MCF 10A (cell line): ENCODE measurements at regions of chr14 and their contacts with region 1.

Region 1: GRCh38 chr14:55051426-55052268 is at the start of gene MAPK1IP1L:
- DNase-seq: peak; percentile 94
- H3K4me3 Mint-ChIP-seq: peak within 1 kb of the TSS; percentile 83
- H3K27ac Mint-ChIP-seq: peak within 1 kb of the TSS; percentile 98
- H3K4me1 Mint-ChIP-seq: peaks cover 16% of the 10 kb centered on the region
- H3K27me3 Mint-ChIP-seq: no peaks in the 10 kb centered on the region
- CTCF ChIP-seq: peak; percentile 99
- total RNA-seq, gene MAPK1IP1L: 118 and 123 TPM in 2 replicates

Region 2: DNA sequence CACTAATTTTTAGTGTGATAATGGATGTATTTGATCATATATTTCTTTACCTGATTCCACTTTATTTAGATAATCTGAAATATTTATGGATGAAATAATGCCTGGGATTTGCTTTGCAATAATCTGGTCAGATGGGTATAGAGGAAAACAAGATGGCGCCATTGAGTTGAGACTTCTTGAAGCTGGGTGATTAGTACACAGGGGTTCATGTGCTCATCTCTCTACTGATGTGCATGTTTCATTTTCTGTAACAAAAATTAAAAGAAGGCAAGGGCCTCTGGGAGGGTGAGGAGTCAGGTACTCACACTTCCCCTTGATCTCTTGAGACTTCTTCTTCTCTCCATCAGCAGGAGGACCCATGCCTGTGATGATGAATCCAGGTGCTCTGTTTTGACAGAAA is 210.8 kb before region 1 on chr14:
- CTCF ChIA-PET with region 1: no interaction called
- POLR2A ChIA-PET with region 1: no interaction called
- intact Hi-C with region 1: no loop called
- DNase-seq: no peak
- H3K4me3 Mint-ChIP-seq: no peak overlapping the region
- H3K27ac Mint-ChIP-seq: no peak overlapping the region
- H3K4me1 Mint-ChIP-seq: peaks cover 14% of the 10 kb centered on the region
- H3K27me3 Mint-ChIP-seq: no peaks in the 10 kb centered on the region
- CTCF ChIP-seq: no peak

Region 3: DNA sequence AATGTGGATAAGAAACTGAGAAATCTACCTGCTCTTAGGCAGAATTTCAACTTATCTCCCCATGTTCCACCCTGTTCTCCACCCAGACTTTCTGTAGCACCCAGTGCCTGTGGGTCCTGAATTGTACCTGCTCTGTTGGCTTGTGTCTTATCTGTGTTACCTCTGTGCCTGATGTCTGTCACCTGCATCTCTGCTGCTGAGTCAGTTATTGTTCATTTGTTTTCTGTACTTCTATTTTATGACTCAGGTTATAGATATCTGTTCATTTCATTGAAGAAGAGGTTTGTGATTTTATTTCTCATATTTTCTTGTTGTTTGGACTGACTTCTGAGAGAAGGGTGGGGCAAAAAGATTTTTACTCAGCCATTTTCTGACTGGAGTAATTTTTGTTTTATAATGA is 12.9 kb before region 1 on chr14:
- CTCF ChIA-PET with region 1: interaction called, 13 read pairs
- POLR2A ChIA-PET with region 1: interaction called, 61 read pairs
- intact Hi-C with region 1: no loop called
- DNase-seq: no peak
- H3K4me3 Mint-ChIP-seq: no peak overlapping the region
- H3K27ac Mint-ChIP-seq: peak overlapping the region; percentile 59
- H3K4me1 Mint-ChIP-seq: peaks cover 15% of the 10 kb centered on the region
- H3K27me3 Mint-ChIP-seq: no peaks in the 10 kb centered on the region
- CTCF ChIP-seq: no peak

Region 4: DNA sequence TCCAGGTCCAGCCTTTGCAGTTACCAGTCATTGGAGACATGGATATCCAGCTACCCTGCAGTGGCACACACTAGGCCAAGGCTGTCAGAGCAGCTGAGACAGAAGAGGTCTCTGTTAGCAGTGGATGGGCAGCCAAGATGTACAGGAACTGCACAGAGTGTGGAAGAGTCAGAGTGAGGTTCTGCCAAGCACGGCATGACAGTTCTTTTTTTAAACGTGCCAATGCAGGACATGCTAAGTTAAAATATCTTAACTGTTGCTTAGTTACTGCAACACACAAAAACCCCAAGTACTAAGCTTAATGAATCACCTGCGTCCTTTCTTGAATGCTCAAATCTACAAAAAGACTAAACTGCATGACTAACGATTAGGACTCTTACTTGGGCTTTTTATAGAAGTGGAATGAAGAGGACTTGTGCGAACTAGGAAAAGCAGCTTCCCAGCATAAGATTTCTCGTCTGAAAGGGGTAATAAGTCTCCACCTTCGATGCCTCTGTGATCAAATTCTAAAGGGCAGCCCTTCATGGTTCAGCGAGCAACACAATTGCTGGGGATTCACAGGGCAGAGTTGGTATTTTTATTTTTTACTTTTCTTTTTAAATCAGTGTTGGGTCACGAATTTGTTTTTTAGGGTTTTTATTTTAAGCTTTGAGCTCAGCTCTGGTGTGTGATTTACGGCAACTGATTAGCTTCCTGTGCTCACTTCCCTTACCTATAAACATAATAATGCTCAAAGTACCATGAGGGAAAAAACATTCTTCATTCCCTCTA is 20.4 kb after region 1 on chr14:
- CTCF ChIA-PET with region 1: interaction called, 33 read pairs
- POLR2A ChIA-PET with region 1: interaction called, 356 read pairs
- intact Hi-C with region 1: no loop called
- DNase-seq: peak; percentile 81
- H3K4me3 Mint-ChIP-seq: peak overlapping the region; percentile 50
- H3K27ac Mint-ChIP-seq: peak overlapping the region; percentile 100
- H3K4me1 Mint-ChIP-seq: peaks cover 47% of the 10 kb centered on the region
- H3K27me3 Mint-ChIP-seq: no peaks in the 10 kb centered on the region
- CTCF ChIP-seq: no peak

Region 5: DNA sequence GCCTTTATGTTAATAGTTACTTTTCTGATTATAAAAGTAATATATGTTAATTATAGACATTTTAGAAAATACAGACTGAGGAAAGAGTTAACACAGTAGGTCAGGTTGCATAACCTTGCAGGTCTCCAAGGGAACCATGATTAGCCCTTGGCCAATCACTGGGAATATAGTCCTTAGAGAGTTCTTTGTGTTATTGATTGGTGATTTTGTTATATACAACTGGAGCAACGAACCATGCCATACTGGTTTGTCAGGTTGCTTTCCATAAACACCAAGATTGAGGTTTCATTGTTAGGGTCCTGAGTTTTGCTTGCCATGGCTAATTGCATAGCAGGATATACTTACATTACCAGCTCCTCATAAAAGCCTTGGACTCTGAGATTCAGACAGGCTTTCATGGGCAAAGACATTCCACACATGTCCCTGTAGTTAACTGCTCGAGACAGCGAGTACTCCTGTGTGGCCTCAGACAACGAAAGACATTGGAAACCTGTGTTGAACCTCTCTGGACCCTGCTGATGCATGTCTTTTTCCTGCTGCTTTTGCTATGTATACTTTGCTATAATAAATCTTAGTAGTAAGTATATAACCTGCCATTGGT is 33.5 kb after region 1 on chr14:
- CTCF ChIA-PET with region 1: interaction called, 8 read pairs
- POLR2A ChIA-PET with region 1: interaction called, 10 read pairs
- intact Hi-C with region 1: loop called (anchors 1 kb)
- DNase-seq: no peak
- H3K4me3 Mint-ChIP-seq: no peak overlapping the region
- H3K27ac Mint-ChIP-seq: no peak overlapping the region
- H3K4me1 Mint-ChIP-seq: no peaks in the 10 kb centered on the region
- H3K27me3 Mint-ChIP-seq: no peaks in the 10 kb centered on the region
- CTCF ChIP-seq: no peak

Region 6: GRCh38 chr14:55102141-55102621 is 50.5 kb after region 1 on chr14:
- CTCF ChIA-PET with region 1: interaction called, 3 read pairs
- POLR2A ChIA-PET with region 1: interaction called, 59 read pairs
- intact Hi-C with region 1: no loop called
- DNase-seq: peak; percentile 95
- H3K4me3 Mint-ChIP-seq: peak overlapping the region; percentile 81
- H3K27ac Mint-ChIP-seq: peak overlapping the region; percentile 99
- H3K4me1 Mint-ChIP-seq: peaks cover 35% of the 10 kb centered on the region
- H3K27me3 Mint-ChIP-seq: no peaks in the 10 kb centered on the region
- CTCF ChIP-seq: no peak

Region 7: GRCh38 chr14:55129428-55130195 is 78.0 kb after region 1 on chr14:
- CTCF ChIA-PET with region 1: interaction called, 5 read pairs
- POLR2A ChIA-PET with region 1: interaction called, 45 read pairs
- intact Hi-C with region 1: loop called (anchors 2 kb)
- DNase-seq: peak; percentile 73
- H3K4me3 Mint-ChIP-seq: peak overlapping the region; percentile 90
- H3K27ac Mint-ChIP-seq: peak overlapping the region; percentile 89
- H3K4me1 Mint-ChIP-seq: peaks cover 16% of the 10 kb centered on the region
- H3K27me3 Mint-ChIP-seq: no peaks in the 10 kb centered on the region
- CTCF ChIP-seq: no peak